Activated CD4-positive, alpha-beta T cell treated with anti-CD3 and anti-CD28 coated beads for 36 hours (primary cell): ENCODE measurements at regions of chr21 and their contacts with region 1.

Region 1: DNA sequence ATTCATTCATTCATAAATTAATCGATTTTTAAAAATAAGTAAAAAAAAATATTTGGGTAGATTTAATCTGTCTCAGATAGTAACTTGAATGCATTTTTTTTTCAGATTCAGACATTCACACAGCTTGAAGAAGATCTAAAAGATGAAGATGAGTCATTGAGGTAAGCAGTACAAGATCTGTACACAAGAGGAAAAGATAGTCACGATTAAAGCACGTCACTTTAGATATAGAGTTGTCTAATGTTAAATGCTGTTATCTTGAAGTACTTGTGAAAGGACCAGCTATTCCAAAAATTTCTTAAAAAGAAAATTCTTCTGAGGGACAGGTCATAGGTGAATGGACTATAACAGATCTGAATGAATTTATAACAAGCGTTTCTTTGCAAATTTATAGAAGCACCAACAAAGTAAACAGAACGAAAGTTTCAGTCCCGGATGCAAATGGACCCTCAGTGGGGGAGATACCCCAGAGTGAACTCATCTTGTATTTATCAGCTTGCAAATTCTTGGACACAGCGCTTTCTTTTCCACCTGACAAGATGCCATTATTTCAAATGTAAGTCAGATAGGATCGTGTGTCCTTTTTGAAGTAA is 31.2 kb upstream of the MORC3 start:
- DNase-seq: no peak
- ATAC-seq: peak; percentile 78
- H3K4me3 Mint-ChIP-seq: peak overlapping the region; percentile 57
- H3K27ac Mint-ChIP-seq: peak overlapping the region; percentile 95
- H3K4me1 Mint-ChIP-seq: peaks cover 22% of the 10 kb centered on the region
- H3K27me3 Mint-ChIP-seq: no peaks in the 10 kb centered on the region

Region 2: DNA sequence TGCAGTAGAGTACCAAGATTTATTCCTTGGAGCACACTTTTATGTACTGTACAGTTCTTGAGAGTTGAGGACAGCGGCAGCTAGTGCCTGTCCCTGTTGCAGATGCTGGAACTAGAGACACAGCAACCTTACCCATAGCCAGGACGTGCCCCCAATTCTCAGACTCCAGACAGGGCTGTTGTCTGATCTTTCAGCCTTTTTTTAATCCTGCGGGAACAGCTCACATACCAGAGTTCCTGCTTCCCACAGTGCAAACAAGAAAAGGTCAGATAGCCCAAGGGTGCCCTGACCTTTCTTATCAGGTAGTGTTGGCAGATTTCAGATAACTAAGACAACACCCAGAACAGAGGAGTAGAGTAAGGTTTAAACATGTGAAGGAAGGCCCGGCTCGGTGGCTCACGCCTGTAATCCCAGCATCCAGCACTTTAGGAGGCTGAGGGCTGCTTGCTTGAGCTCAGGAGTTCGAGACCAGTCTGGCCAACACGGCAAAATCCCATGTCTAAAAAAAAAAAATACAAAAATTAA is 53.6 kb before region 1 on chr21:
- CTCF ChIA-PET with region 1: no interaction called
- POLR2A ChIA-PET with region 1: no interaction called
- intact Hi-C with region 1: loop called in 1 of 2 experiments (anchors 2 kb)
- DNase-seq: no peak
- ATAC-seq: no peak
- H3K4me3 Mint-ChIP-seq: no peak overlapping the region
- H3K27ac Mint-ChIP-seq: no peak overlapping the region
- H3K4me1 Mint-ChIP-seq: peaks cover 15% of the 10 kb centered on the region
- H3K27me3 Mint-ChIP-seq: no peaks in the 10 kb centered on the region

Region 3: DNA sequence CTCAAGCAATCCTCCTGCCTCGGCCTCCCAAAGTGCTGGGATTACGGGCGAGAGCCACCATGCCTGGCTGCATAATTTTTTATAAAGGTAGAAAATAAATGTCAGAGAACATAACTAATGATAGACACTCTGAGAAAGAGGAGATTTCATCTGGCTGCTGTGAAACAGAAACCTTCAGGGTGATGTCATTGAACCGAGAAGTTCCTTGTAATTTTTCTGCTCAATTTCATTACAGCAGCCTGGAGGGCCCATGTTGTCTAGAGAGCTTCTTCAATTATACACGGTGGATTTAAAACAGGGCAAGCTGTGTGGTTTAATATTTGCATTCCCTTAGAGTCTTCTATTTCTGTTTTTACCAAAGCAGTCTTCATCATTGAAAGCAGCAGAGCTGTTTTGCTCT is 33.1 kb before region 1 on chr21:
- CTCF ChIA-PET with region 1: no interaction called
- POLR2A ChIA-PET with region 1: no interaction called
- intact Hi-C with region 1: no loop called
- DNase-seq: no peak
- ATAC-seq: peak; percentile 64
- H3K4me3 Mint-ChIP-seq: no peak overlapping the region
- H3K27ac Mint-ChIP-seq: peak overlapping the region; percentile 48
- H3K4me1 Mint-ChIP-seq: peaks cover 30% of the 10 kb centered on the region
- H3K27me3 Mint-ChIP-seq: no peaks in the 10 kb centered on the region

Region 4: GRCh38 chr21:36310016-36310415 is 21.3 kb after region 1 on chr21:
- CTCF ChIA-PET with region 1: interaction called, 4 read pairs
- POLR2A ChIA-PET with region 1: interaction called, 3 read pairs
- intact Hi-C with region 1: loop called (anchors 1 kb)
- DNase-seq: peak; percentile 83
- ATAC-seq: peak; percentile 99
- H3K4me3 Mint-ChIP-seq: no peak overlapping the region
- H3K27ac Mint-ChIP-seq: peak overlapping the region; percentile 79
- H3K4me1 Mint-ChIP-seq: peaks cover 7% of the 10 kb centered on the region
- H3K27me3 Mint-ChIP-seq: no peaks in the 10 kb centered on the region